Activated CD4-positive, alpha-beta T cell treated with anti-CD3 and anti-CD28 coated beads for 36 hours (primary cell): ENCODE measurements at regions of chr19 and their contacts with region 1.

Region 1: GRCh38 chr19:14059093-14059480 is 2.8 kb downstream of the PALM3 start:
- DNase-seq: peak; percentile 77
- ATAC-seq: peak; percentile 59
- H3K4me3 Mint-ChIP-seq: peak overlapping the region; percentile 50
- H3K27ac Mint-ChIP-seq: no peak overlapping the region
- H3K4me1 Mint-ChIP-seq: peaks cover 16% of the 10 kb centered on the region
- H3K27me3 Mint-ChIP-seq: peaks cover 31% of the 10 kb centered on the region

Region 2: GRCh38 chr19:13932911-13933393 is 126.1 kb before region 1 on chr19:
- CTCF ChIA-PET with region 1: no interaction called
- POLR2A ChIA-PET with region 1: no interaction called
- intact Hi-C with region 1: no loop called
- DNase-seq: no peak
- ATAC-seq: no peak
- H3K4me3 Mint-ChIP-seq: no peak overlapping the region
- H3K27ac Mint-ChIP-seq: no peak overlapping the region
- H3K4me1 Mint-ChIP-seq: peaks cover 1% of the 10 kb centered on the region
- H3K27me3 Mint-ChIP-seq: peaks cover 6% of the 10 kb centered on the region

Region 3: DNA sequence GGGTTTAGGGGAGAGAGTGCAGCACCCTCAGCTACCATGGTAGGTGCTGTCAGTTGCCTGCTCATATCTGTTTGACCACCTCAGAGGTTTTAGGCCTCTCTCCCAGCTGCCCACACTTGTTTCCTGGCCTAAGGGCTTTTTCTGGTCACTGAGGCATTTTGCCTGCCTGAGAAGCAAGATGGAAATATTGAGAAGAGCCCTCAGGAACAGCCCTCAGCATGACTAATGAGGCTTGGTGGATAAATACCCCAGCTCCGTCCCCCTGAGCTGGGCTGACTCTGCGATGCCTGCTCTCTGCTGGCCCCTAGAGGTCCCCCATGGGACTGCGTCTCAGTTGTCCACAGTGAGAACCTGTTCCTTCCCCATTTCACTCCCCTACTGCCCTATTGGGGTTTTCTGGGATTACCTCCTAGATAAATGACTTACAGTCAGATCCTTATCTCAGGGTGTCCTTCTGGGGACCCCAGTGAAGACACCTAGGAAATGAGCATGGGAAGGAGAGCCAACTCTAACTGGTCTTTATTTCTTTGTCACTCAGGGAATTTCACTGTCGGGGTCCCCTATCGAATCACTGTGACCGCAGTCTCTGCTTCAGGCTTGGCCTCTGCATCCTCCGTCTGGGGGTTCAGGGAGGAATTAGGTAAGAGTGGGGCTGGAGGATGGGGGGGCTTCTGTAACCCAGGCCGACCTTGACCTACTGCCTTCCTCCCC is 10.5 kb before region 1 on chr19:
- CTCF ChIA-PET with region 1: interaction called, 35 read pairs
- POLR2A ChIA-PET with region 1: interaction called, 3 read pairs
- intact Hi-C with region 1: no loop called
- DNase-seq: peak; percentile 87
- ATAC-seq: peak; percentile 87
- H3K4me3 Mint-ChIP-seq: no peak overlapping the region
- H3K27ac Mint-ChIP-seq: peak overlapping the region; percentile 25
- H3K4me1 Mint-ChIP-seq: peaks cover 4% of the 10 kb centered on the region
- H3K27me3 Mint-ChIP-seq: no peaks in the 10 kb centered on the region

Region 4: DNA sequence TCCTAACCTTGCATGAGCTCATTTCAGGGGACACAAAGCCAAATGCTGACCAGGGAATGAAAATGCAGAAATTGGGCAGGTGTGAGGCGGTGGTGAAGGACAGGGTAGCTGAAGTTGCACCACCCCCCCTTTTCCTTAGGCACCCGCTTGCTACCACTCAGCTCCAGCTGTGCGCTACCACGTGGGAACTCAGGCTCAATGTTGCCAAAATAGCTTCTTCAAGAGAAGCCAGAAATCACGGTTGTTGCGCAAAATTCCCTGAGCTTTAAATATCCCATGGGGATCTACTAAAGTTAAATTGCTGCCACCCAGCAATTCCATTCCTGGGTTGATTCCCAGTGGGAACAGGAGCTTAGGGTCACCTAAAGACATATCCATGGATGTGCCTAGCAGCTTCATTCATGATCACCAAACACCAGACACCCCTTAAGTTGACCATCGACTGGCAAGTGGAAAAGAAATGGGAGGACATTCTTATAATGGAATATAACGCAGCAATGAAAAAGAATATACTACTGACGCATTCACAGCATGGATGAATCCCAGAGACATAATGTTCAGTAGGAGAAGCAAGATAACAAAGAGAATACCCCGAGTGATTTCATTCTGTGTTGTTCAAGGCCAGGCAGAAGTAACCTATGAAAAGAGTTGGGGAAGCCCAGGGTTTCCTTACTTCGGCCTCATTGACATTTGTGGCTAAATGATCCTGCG is 159.7 kb after region 1 on chr19:
- CTCF ChIA-PET with region 1: no interaction called
- POLR2A ChIA-PET with region 1: no interaction called
- intact Hi-C with region 1: no loop called
- DNase-seq: no peak
- ATAC-seq: no peak
- H3K4me3 Mint-ChIP-seq: no peak overlapping the region
- H3K27ac Mint-ChIP-seq: no peak overlapping the region
- H3K4me1 Mint-ChIP-seq: peaks cover 13% of the 10 kb centered on the region
- H3K27me3 Mint-ChIP-seq: no peaks in the 10 kb centered on the region